ENCODE measurements at regions of chr7 and their contacts with region 1.

Region 1: GRCh38 chr7:80593869-80594582 is 44.4 kb upstream of the CD36 start:
- DNase-seq: no peak

Region 2: DNA sequence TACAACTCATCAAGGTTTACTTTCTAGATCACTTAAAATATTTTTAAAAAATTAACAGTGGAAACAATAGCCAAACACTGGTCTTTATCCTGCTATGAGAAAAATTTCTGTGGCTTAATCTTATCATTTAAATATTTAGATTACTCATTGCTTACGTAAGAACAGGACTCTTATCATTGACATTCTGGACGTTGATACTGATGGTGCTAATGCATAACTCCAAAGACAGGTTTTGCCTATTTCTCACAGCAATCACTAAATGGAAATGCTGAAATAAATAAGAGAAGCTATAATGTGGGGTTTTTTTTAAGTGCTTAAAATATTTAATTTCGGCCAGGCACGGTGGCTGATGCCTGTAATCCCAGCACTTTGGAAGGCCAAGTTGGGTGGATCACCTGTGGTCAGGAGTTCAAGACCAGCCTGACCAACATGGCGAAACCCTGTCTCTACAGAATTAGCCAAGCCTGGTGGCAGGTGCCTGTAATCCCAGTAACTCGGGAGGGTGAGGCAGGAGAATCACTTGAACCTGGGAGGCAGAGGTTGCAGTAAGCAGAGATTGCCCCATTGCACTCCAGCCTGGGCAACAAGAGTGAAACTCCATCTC is 980.8 kb after region 1 on chr7:
- intact Hi-C with region 1: loop called (anchors 5 kb)
- DNase-seq: no peak